Activated CD4-positive, alpha-beta T cell treated with anti-CD3 and anti-CD28 coated beads for 36 hours (primary cell): ENCODE measurements at regions of chr7 and their contacts with region 1.

Region 1: GRCh38 chr7:134140889-134141867 is 14.0 kb downstream of the LRGUK start:
- DNase-seq: peak; percentile 75
- ATAC-seq: peak; percentile 83
- H3K4me3 Mint-ChIP-seq: no peak overlapping the region
- H3K27ac Mint-ChIP-seq: no peak overlapping the region
- H3K4me1 Mint-ChIP-seq: peaks cover 2% of the 10 kb centered on the region
- H3K27me3 Mint-ChIP-seq: peaks cover 2% of the 10 kb centered on the region

Region 2: GRCh38 chr7:133936074-133936473 is 205.1 kb before region 1 on chr7:
- CTCF ChIA-PET with region 1: no interaction called
- POLR2A ChIA-PET with region 1: no interaction called
- intact Hi-C with region 1: no loop called
- DNase-seq: no peak
- ATAC-seq: no peak
- H3K4me3 Mint-ChIP-seq: no peak overlapping the region
- H3K27ac Mint-ChIP-seq: no peak overlapping the region
- H3K4me1 Mint-ChIP-seq: no peaks in the 10 kb centered on the region
- H3K27me3 Mint-ChIP-seq: no peaks in the 10 kb centered on the region

Region 3: DNA sequence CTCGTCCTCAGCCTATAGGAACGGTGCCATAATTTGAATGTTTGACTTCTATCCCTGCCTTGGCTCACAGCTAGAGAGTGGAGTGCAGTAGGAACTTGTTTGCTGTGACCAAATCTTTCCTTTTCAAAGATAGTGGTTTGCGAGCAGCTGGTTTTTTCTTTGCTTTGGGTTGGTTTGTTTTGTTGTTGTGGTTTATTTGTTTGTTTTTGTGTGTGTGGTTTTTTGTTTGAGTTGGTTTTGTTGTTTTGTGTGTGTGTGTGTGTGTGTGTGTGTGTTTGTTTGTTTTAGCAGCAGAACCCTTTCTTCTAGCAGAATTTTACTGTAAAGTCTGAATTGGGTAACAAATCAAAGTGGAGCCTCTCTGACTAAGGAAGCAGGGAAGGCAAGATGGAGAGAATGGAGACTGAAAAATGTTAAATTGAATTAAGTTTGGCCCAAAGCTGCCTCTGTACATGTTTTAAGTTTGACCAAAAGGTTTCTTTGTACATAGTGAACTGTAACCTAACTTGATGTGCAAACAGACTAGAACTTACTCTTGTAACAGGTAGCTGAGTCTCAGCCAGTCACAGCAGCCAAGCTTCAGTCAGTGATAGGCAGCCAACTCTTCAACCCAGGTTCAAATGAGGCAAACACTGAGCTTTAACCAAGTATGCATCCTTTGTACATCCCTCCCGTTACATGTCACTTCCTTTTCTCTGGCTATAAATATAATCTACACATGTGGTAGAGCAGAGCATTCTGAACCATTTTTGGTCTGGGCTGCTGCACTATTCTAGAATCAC is 163.5 kb before region 1 on chr7:
- CTCF ChIA-PET with region 1: no interaction called
- POLR2A ChIA-PET with region 1: no interaction called
- intact Hi-C with region 1: no loop called
- DNase-seq: no peak
- ATAC-seq: no peak
- H3K4me3 Mint-ChIP-seq: no peak overlapping the region
- H3K27ac Mint-ChIP-seq: no peak overlapping the region
- H3K4me1 Mint-ChIP-seq: no peaks in the 10 kb centered on the region
- H3K27me3 Mint-ChIP-seq: no peaks in the 10 kb centered on the region

Region 4: GRCh38 chr7:134126966-134127848 is 14.0 kb before region 1 on chr7 and contains the start of gene LRGUK:
- CTCF ChIA-PET with region 1: interaction called, 19 read pairs
- POLR2A ChIA-PET with region 1: no interaction called
- intact Hi-C with region 1: no loop called
- DNase-seq: peak; percentile 89
- ATAC-seq: peak; percentile 100
- H3K4me3 Mint-ChIP-seq: peak within 1 kb of the TSS; percentile 76
- H3K27ac Mint-ChIP-seq: no peak within 1 kb of the TSS
- H3K4me1 Mint-ChIP-seq: peaks cover 16% of the 10 kb centered on the region
- H3K27me3 Mint-ChIP-seq: peaks cover 16% of the 10 kb centered on the region
- total RNA-seq, gene LRGUK: 0.07 to 0.14 TPM

Region 5: GRCh38 chr7:134154581-134155130 is 13.5 kb after region 1 on chr7:
- CTCF ChIA-PET with region 1: interaction called, 10 read pairs
- POLR2A ChIA-PET with region 1: no interaction called
- intact Hi-C with region 1: no loop called
- DNase-seq: no peak
- ATAC-seq: no peak
- H3K4me3 Mint-ChIP-seq: no peak overlapping the region
- H3K27ac Mint-ChIP-seq: no peak overlapping the region
- H3K4me1 Mint-ChIP-seq: no peaks in the 10 kb centered on the region
- H3K27me3 Mint-ChIP-seq: peaks cover 2% of the 10 kb centered on the region

Region 6: GRCh38 chr7:134327896-134328295 is 186.7 kb after region 1 on chr7:
- CTCF ChIA-PET with region 1: no interaction called
- POLR2A ChIA-PET with region 1: no interaction called
- intact Hi-C with region 1: loop called in 1 of 2 experiments (anchors 5 kb)
- DNase-seq: peak; percentile 72
- ATAC-seq: peak; percentile 87
- H3K4me3 Mint-ChIP-seq: no peak overlapping the region
- H3K27ac Mint-ChIP-seq: no peak overlapping the region
- H3K4me1 Mint-ChIP-seq: no peaks in the 10 kb centered on the region
- H3K27me3 Mint-ChIP-seq: peaks cover 2% of the 10 kb centered on the region

Region 7: DNA sequence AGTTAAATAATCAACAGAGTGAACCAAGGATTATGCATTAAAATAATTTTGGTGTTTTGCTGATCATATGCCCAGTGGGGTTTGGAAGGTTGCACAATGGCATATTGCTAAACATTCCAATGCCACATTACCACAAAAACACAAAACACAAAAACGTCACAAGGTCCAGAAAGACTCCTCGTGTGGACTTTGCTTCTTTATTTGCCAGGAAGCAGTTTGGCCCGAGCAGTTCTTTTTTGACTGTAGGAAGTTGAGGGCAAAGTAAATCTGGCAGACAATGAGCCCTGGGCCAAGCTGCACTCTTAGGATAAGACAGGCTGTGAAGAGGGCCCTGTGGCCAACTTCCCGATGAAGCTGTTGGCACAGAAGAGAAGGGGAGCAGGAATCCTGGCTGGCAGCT is 214.7 kb after region 1 on chr7:
- CTCF ChIA-PET with region 1: interaction called, 5 read pairs
- POLR2A ChIA-PET with region 1: no interaction called
- intact Hi-C with region 1: loop called in 1 of 2 experiments (anchors 2 kb)
- DNase-seq: no peak
- ATAC-seq: no peak
- H3K4me3 Mint-ChIP-seq: no peak overlapping the region
- H3K27ac Mint-ChIP-seq: no peak overlapping the region
- H3K4me1 Mint-ChIP-seq: peaks cover 10% of the 10 kb centered on the region
- H3K27me3 Mint-ChIP-seq: peaks cover 6% of the 10 kb centered on the region